Mammary epithelial cell (primary cell): ENCODE measurements at regions of chr1 and their contacts with region 1.

Region 1: GRCh38 chr1:8026153-8026975 is at the start of gene ERRFI1:
- DNase-seq: peak; percentile 93
- H3K4me3 ChIP-seq: peak within 1 kb of the TSS; percentile 69 to 96 (median 90)
- H3K27ac ChIP-seq: peak within 1 kb of the TSS; percentile 93
- H3K4me1 ChIP-seq: peaks cover 46% of the 10 kb centered on the region
- H3K27me3 ChIP-seq: no peaks in the 10 kb centered on the region
- CTCF ChIP-seq: no peak
- total RNA-seq, gene ERRFI1: 38.8 to 150 TPM

Region 2: DNA sequence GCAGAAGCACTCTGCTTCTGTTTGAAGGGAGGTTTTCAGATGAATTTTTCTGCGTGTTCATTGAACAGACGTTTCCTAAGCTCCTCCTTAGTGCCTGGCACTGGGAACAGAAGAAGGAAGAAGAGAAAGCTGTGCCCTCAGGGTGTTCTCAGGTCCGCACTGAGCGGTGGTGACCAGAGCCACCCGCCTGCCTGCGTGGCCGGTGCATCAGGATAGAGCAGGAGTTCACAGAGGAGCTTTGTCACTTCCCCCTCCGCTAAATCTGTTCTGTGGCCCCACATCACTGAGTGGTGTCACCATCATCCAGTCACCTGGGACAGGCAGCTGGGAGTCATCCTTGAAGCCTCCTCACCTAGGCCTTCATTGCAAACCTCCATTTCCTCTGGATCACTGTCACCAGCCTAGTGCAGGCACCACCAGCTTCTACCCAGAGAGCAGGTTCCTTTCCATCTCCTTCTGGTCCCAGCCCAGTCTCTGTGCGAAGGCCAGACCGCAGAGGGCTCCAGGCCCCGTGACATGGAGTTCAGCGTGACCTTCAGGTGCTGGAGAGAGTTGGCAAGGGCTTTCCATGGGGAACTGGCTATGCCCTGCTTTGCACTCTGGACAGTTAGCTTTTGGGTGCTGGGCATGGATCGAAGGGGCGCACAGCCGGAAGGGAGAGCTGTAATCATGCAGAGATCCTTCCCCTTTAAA is 43.1 kb before region 1 on chr1:
- CTCF ChIA-PET with region 1: no interaction called
- dilution Hi-C with region 1: no loop called
- in situ Hi-C with region 1: no loop called
- intact Hi-C with region 1: loop called (anchors 1 kb)
- DNase-seq: no peak
- H3K4me3 ChIP-seq: no peak overlapping the region
- H3K27ac ChIP-seq: no peak overlapping the region
- H3K4me1 ChIP-seq: peaks cover 3% of the 10 kb centered on the region
- H3K27me3 ChIP-seq: no peaks in the 10 kb centered on the region
- CTCF ChIP-seq: no peak

Region 3: DNA sequence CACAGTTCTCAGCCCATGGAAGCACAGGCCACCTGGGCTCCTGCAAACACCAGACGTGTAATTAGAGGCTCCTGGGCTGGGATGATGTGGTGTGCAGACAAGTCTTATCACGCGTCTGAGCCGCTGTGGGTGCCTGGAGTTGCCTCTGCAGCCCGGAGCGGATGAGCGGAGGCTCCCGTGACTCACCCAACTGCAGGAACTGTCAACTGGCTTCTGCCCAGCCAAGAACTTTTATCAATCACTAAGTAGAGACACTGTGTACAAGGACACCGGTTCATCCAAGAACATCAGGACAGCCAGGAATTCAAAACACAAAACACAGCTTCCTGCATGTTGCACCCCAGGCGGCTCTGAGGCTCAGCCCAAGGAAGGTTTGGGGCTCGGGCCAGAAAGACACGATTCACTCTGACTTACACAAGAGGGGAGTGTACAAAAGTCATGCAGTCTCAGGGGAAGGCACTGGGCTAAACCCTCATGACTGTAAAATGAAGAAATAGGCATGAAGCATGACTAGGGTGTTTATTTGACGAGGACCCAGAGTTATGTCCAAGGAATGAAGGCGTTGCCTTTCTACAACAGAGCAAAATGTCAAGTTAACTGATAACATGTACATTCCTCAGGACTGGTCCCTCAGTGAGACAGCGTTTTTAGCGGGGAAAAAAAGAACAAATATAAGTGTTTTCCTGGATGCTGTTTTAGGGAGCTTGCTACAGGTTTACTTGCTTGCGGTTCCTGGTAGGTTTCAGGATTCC is 21.4 kb before region 1 on chr1:
- CTCF ChIA-PET with region 1: no interaction called
- dilution Hi-C with region 1: no loop called
- in situ Hi-C with region 1: no loop called
- intact Hi-C with region 1: loop called (anchors 1 kb)
- DNase-seq: peak; percentile 99
- H3K4me3 ChIP-seq: no peak overlapping the region
- H3K27ac ChIP-seq: peak overlapping the region; percentile 91
- H3K4me1 ChIP-seq: peaks cover 39% of the 10 kb centered on the region
- H3K27me3 ChIP-seq: no peaks in the 10 kb centered on the region
- CTCF ChIP-seq: no peak

Region 4: DNA sequence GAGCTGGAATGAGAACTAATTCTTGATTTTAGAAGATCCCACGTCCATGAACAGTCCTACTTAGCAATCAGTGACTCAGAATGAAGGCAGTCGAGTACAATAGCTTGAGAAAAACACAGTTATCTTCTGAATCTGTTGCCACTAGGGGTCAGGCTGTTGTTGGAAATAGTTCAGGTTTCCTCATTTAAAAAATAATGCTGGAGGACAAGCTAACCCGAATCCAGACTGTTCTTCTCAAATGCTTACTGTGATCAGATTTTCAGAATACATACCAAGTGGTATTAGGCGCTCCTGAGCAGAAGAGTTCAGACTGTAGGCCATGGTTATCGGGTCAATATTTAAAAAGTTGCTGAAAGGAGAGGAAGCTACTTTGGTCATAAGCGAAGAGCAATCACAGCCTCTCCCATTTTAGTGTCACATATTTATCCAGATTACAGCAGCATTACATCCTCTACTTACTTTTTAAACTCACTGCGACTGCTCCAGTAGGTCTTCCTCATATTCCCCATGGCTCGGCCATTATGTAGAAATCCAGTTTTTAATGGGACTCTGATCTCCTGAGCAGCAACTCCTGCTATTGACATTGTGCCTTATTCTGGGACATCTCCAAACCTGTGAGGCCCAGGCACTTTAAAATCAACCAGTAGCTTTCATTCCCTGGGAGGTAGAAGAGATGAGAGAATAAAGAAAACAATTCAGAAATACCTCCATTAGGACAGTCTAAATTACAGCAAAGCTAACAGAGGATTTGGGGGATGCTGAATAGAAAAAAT is 11.1 kb before region 1 on chr1:
- CTCF ChIA-PET with region 1: no interaction called
- dilution Hi-C with region 1: no loop called
- in situ Hi-C with region 1: no loop called
- intact Hi-C with region 1: loop called (anchors 2 kb)
- DNase-seq: peak; percentile 78
- H3K4me3 ChIP-seq: no peak overlapping the region
- H3K27ac ChIP-seq: peak overlapping the region; percentile 30
- H3K4me1 ChIP-seq: peaks cover 58% of the 10 kb centered on the region
- H3K27me3 ChIP-seq: no peaks in the 10 kb centered on the region
- CTCF ChIP-seq: peak; percentile 60 to 67

Region 5: GRCh38 chr1:8040586-8040985 is 14.2 kb after region 1 on chr1:
- CTCF ChIA-PET with region 1: no interaction called
- dilution Hi-C with region 1: no loop called
- in situ Hi-C with region 1: no loop called
- intact Hi-C with region 1: no loop called
- DNase-seq: peak; percentile 96
- H3K4me3 ChIP-seq: no peak overlapping the region
- H3K27ac ChIP-seq: peak overlapping the region; percentile 66
- H3K4me1 ChIP-seq: peaks cover 23% of the 10 kb centered on the region
- H3K27me3 ChIP-seq: no peaks in the 10 kb centered on the region
- CTCF ChIP-seq: no peak

Region 6: DNA sequence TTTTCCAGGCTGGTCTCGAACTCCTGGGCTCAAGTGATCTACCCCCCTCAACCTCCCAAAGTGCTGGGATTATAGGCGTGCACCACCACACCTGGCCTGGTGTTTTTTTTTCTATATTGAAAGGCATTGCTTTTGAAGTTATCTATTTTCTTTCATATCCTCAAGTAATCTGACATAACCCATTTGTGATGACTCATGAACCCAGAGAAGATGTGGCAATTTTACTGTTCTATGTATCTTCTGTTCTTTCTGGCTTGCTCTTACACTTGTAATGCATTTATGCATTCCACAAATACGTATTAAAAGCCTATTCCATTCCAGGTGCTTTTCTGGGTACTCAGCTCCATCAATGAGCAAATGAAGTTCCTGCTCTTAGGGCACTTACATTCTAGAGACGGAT is 29.6 kb after region 1 on chr1:
- CTCF ChIA-PET with region 1: no interaction called
- dilution Hi-C with region 1: no loop called
- in situ Hi-C with region 1: no loop called
- intact Hi-C with region 1: loop called (anchors 1 kb)
- DNase-seq: peak; percentile 95
- H3K4me3 ChIP-seq: no peak overlapping the region
- H3K27ac ChIP-seq: no peak overlapping the region
- H3K4me1 ChIP-seq: peaks cover 25% of the 10 kb centered on the region
- H3K27me3 ChIP-seq: no peaks in the 10 kb centered on the region
- CTCF ChIP-seq: no peak

Region 7: DNA sequence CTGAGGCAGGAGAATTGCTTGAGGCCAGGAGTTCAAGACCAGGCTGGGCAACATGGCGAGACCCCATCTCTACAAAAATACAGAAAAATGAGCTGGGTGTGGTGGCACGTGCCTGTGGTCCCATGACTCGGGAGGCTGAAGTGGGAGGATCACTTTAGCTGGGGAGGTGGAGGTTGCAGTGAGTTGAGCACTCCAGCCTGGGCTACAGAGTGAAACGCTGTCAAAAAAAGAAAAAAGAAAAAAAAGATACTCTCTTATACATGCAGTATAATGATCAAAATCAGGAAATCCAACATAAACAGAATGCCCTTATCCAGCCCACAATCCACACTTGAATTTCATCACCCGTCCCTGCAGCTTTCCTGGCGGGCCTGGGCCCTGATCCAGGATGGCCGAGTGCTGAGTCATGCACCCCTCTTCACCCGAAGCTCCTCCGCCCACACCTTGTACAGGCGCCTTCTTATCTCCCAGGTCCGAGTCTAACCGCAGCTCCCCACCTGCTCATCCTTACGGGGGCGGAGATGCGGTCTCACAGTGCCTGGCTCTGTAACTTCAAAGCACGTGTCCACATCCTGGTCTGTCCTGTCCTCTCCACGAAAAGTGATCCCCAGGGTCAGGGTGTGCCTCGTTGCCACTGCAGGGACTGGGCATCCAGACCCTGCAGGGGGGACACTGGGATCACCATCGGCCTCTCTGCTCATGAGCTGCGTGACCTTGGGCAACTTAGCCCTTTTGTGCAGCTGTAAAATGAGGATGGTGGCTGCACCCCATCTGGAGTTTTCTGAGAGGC is 171.3 kb after region 1 on chr1:
- CTCF ChIA-PET with region 1: no interaction called
- dilution Hi-C with region 1: no loop called
- in situ Hi-C with region 1: no loop called
- intact Hi-C with region 1: loop called (anchors 1 kb)
- DNase-seq: peak; percentile 94
- H3K4me3 ChIP-seq: no peak overlapping the region
- H3K27ac ChIP-seq: peak overlapping the region; percentile 25
- H3K4me1 ChIP-seq: peaks cover 45% of the 10 kb centered on the region
- H3K27me3 ChIP-seq: no peaks in the 10 kb centered on the region
- CTCF ChIP-seq: no peak

Region 8: GRCh38 chr1:8302081-8302956 is 276.0 kb after region 1 on chr1:
- CTCF ChIA-PET with region 1: no interaction called
- dilution Hi-C with region 1: no loop called
- in situ Hi-C with region 1: loop called in 1 of 2 experiments (anchors 10 kb)
- intact Hi-C with region 1: no loop called
- DNase-seq: no peak
- H3K4me3 ChIP-seq: no peak overlapping the region
- H3K27ac ChIP-seq: no peak overlapping the region
- H3K4me1 ChIP-seq: no peaks in the 10 kb centered on the region
- H3K27me3 ChIP-seq: no peaks in the 10 kb centered on the region
- CTCF ChIP-seq: no peak